HCT116 (cell line): ENCODE measurements at regions of chr3 and their contacts with region 1.

Region 1: DNA sequence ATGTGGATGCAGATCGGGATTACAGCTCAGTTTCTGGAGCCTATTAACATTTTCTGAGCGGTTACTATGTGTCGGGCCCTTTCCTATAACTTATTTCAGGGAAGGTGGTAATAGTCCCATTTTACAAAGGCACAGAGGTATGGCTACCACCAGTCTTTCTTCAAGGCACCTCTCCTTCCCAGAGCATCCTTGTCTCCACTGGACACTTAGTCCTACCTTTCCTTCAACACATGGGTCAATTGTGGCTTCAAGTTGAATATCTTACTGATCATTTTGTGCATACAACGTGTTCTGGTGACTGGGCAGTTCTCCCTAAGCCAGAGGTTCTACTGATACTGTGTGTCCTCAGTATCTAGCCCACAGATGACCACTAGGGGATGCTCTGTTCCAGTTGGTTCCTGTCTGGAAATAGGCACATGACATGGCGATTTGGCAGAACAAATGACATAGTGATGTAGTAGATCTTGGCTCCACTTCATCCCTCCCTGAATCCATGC is 60.7 kb upstream of the CMTM8 start:
- DNase-seq: peak; percentile 90
- ATAC-seq: peak; percentile 91
- H3K4me3 ChIP-seq: no peak overlapping the region
- H3K27ac ChIP-seq: no peak overlapping the region; the same call in 1 of the 2 replicates
- H3K4me1 ChIP-seq: peaks cover 17 to 27% of the 10 kb centered on the region in 2 experiments
- H3K27me3 ChIP-seq: no peaks in the 10 kb centered on the region
- CTCF ChIP-seq: peak; percentile 94 to 98 (median 94)
- POLR2A ChIP-seq: no peak
- RAD21 ChIP-seq: peak; percentile 96

Region 2: DNA sequence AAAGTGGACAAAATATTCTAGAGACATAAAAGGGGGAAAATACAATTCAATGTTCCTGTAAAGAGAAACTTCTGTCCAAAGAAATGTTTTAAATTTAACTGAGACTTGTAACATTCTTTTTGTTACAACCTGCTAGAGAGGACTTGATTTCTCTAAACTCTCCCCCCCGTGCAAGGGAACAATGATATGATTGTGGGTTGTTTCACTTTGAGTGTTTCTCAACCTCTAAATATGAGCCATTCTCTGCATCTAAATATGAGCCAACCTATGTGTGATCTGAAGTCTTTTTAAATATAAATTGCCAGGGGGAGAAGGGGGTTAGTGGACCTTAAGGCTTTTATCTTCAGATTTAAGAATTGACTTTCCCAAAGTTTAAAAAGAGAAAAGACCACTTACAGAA is 181.6 kb before region 1 on chr3:
- CTCF ChIA-PET with region 1: no interaction called
- POLR2A ChIA-PET with region 1: no interaction called
- RAD21 ChIA-PET with region 1: no interaction called
- intact Hi-C with region 1: no loop called
- DNase-seq: no peak
- ATAC-seq: no peak
- H3K4me3 ChIP-seq: no peak overlapping the region
- H3K27ac ChIP-seq: no peak overlapping the region
- H3K4me1 ChIP-seq: no peaks in the 10 kb centered on the region
- H3K27me3 ChIP-seq: no peaks in the 10 kb centered on the region
- CTCF ChIP-seq: no peak
- POLR2A ChIP-seq: no peak
- RAD21 ChIP-seq: no peak

Region 3: DNA sequence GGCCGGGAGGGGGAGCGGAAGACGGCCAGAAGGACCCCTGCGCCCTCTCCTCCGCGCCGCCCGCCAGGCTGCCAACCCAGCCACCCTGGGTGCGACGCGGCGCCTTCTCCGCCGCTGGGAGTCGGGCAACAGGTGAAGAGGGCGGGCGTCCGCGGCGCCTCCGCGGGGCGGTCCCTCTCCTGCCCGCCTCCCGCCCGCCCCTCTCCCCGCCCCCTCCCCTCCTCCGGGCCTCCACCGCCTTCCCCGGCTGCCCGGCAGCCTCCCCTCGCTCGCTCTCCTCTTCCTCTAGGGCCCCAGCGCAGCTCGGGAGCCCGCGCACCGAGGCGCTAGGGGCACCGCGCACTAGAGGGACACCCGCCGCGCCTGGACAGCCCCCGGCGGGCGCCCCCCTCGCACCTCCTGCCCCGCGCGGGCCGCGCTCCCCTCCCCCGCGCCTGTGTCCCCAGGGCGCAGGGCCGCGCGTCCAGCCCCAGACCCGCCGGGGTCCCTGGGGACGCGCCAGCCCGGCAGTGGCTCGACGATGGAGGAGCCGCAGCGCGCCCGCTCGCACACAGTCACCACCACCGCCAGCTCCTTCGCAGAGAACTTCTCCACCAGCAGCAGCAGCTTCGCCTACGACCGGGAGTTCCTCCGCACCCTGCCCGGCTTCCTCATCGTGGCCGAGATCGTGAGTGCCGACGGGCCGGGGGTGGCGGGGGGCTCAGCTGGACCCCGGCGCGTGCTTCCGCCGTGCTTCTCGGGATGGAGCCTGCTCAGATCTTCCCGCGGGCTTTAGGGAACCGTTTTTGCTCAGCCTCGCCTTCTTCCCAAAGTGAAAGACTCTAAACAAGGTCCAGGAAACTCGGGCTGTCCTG is 60.9 kb after region 1 on chr3 and contains the start of gene CMTM8:
- CTCF ChIA-PET with region 1: no interaction called
- POLR2A ChIA-PET with region 1: interaction called, 3 read pairs
- RAD21 ChIA-PET with region 1: no interaction called
- intact Hi-C with region 1: loop called (anchors 2 kb)
- DNase-seq: no peak
- ATAC-seq: peak; percentile 86
- H3K4me3 ChIP-seq: peak within 1 kb of the TSS; percentile 70 to 88
- H3K27ac ChIP-seq: peak within 1 kb of the TSS; percentile 76
- H3K4me1 ChIP-seq: peaks cover 20 to 35% of the 10 kb centered on the region in 2 experiments
- H3K27me3 ChIP-seq: peaks cover 3% of the 10 kb centered on the region; the same call in 1 of the 2 replicates
- CTCF ChIP-seq: no peak
- POLR2A ChIP-seq: no peak
- RAD21 ChIP-seq: no peak; the same call in 1 of the 2 replicates
- total RNA-seq, gene CMTM8: 19.4 TPM

Region 4: GRCh38 chr3:32296256-32297204 is 118.8 kb after region 1 on chr3:
- CTCF ChIA-PET with region 1: interaction called, 7 read pairs
- POLR2A ChIA-PET with region 1: no interaction called
- RAD21 ChIA-PET with region 1: no interaction called
- intact Hi-C with region 1: loop called (anchors 1 kb)
- DNase-seq: peak; percentile 52
- ATAC-seq: peak; percentile 92
- H3K4me3 ChIP-seq: no peak overlapping the region
- H3K27ac ChIP-seq: no peak overlapping the region
- H3K4me1 ChIP-seq: peaks cover 15 to 28% of the 10 kb centered on the region in 2 experiments
- H3K27me3 ChIP-seq: no peaks in the 10 kb centered on the region
- CTCF ChIP-seq: peak; percentile 76 to 94 (median 83)
- POLR2A ChIP-seq: no peak
- RAD21 ChIP-seq: peak; percentile 84

Region 5: GRCh38 chr3:32340039-32340438 is 162.3 kb after region 1 on chr3:
- CTCF ChIA-PET with region 1: interaction called, 3 read pairs
- POLR2A ChIA-PET with region 1: no interaction called
- RAD21 ChIA-PET with region 1: no interaction called
- intact Hi-C with region 1: loop called (anchors 1 kb)
- DNase-seq: peak; percentile 35
- ATAC-seq: peak; percentile 88
- H3K4me3 ChIP-seq: no peak overlapping the region
- H3K27ac ChIP-seq: no peak overlapping the region
- H3K4me1 ChIP-seq: no peaks in the 10 kb centered on the region
- H3K27me3 ChIP-seq: no peaks in the 10 kb centered on the region
- CTCF ChIP-seq: peak; percentile 51 to 72 (median 57)
- POLR2A ChIP-seq: no peak
- RAD21 ChIP-seq: peak; percentile 85

Region 6: DNA sequence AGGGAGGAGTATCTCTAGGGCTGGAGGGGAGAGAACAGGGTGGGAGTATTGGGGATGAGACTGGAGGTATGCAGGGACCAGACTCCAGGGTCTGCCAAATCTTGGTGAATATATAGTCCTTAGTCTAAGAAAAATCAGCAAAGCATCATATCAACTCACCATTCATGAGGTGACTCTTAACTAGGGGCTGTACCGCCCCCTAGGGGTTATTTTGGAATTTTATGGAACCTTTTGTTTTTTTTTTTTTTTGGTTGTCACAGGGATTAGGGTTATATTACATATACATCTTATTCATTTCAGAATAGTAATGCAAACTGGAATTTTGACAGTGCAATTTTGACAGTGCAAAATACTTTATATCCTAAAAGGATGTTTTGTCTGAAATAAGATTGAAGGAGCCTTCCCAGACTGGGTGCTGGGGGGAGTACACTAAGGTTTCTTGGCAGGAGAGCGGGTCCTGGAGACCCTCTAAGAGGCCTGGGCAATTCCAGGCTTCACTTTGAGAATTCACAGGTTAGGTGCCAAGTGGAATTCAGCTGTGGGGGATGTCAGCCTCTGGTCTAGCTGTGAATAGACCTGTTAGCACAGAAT is 221.4 kb after region 1 on chr3:
- CTCF ChIA-PET with region 1: no interaction called
- POLR2A ChIA-PET with region 1: no interaction called
- RAD21 ChIA-PET with region 1: no interaction called
- intact Hi-C with region 1: loop called (anchors 2 kb)
- DNase-seq: no peak
- ATAC-seq: peak; percentile 67
- H3K4me3 ChIP-seq: no peak overlapping the region
- H3K27ac ChIP-seq: no peak overlapping the region
- H3K4me1 ChIP-seq: peaks cover 3 to 40% of the 10 kb centered on the region in 2 experiments; a peak in 2 of 4 replicates
- H3K27me3 ChIP-seq: no peaks in the 10 kb centered on the region
- CTCF ChIP-seq: peak; percentile 45 to 84 (median 64); a peak in 4 of 6 replicates
- POLR2A ChIP-seq: no peak
- RAD21 ChIP-seq: peak; percentile 62

Region 7: GRCh38 chr3:32467333-32468070 is 289.8 kb after region 1 on chr3:
- CTCF ChIA-PET with region 1: interaction called, 3 read pairs
- POLR2A ChIA-PET with region 1: no interaction called
- RAD21 ChIA-PET with region 1: no interaction called
- intact Hi-C with region 1: loop called (anchors 1 kb)
- DNase-seq: no peak
- ATAC-seq: peak; percentile 66
- H3K4me3 ChIP-seq: no peak overlapping the region
- H3K27ac ChIP-seq: peak overlapping the region; percentile 24; the same call in 1 of the 2 replicates
- H3K4me1 ChIP-seq: peaks cover 39 to 53% of the 10 kb centered on the region in 2 experiments
- H3K27me3 ChIP-seq: no peaks in the 10 kb centered on the region
- CTCF ChIP-seq: peak; percentile 86 to 98 (median 91)
- POLR2A ChIP-seq: no peak
- RAD21 ChIP-seq: peak; percentile 96

Region 8: GRCh38 chr3:32667122-32667521 is 489.4 kb after region 1 on chr3:
- CTCF ChIA-PET with region 1: no interaction called
- POLR2A ChIA-PET with region 1: no interaction called
- RAD21 ChIA-PET with region 1: no interaction called
- intact Hi-C with region 1: loop called (anchors 2 kb)
- DNase-seq: no peak
- ATAC-seq: no peak
- H3K4me3 ChIP-seq: no peak overlapping the region
- H3K27ac ChIP-seq: no peak overlapping the region
- H3K4me1 ChIP-seq: no peaks in the 10 kb centered on the region
- H3K27me3 ChIP-seq: peaks cover 3% of the 10 kb centered on the region; the same call in 1 of the 2 replicates
- CTCF ChIP-seq: no peak
- POLR2A ChIP-seq: no peak
- RAD21 ChIP-seq: no peak